Activated B cell treated with CpG ODN at 0.5 μM for 24 hours (primary cell): ENCODE measurements at regions of chr22 and their contacts with region 1.

Region 1: GRCh38 chr22:28594797-28595462 is 84.7 kb downstream of the TTC28 start:
- DNase-seq: no peak
- ATAC-seq: peak; percentile 71
- H3K4me3 Mint-ChIP-seq: no peak overlapping the region
- H3K27ac Mint-ChIP-seq: no peak overlapping the region
- H3K4me1 Mint-ChIP-seq: no peaks in the 10 kb centered on the region
- H3K27me3 Mint-ChIP-seq: no peaks in the 10 kb centered on the region
- CTCF ChIP-seq: peak; percentile 60

Region 2: GRCh38 chr22:28019881-28020871 is 574.8 kb before region 1 on chr22:
- CTCF ChIA-PET with region 1: interaction called, 30 read pairs
- POLR2A ChIA-PET with region 1: no interaction called
- intact Hi-C with region 1: no loop called
- DNase-seq: peak; percentile 58
- ATAC-seq: peak; percentile 96
- H3K4me3 Mint-ChIP-seq: no peak overlapping the region
- H3K27ac Mint-ChIP-seq: no peak overlapping the region
- H3K4me1 Mint-ChIP-seq: peaks cover 2% of the 10 kb centered on the region
- H3K27me3 Mint-ChIP-seq: no peaks in the 10 kb centered on the region
- CTCF ChIP-seq: no peak

Region 3: GRCh38 chr22:28783786-28784671 is 189.1 kb after region 1 on chr22:
- CTCF ChIA-PET with region 1: no interaction called
- POLR2A ChIA-PET with region 1: no interaction called
- intact Hi-C with region 1: no loop called
- DNase-seq: no peak
- ATAC-seq: no peak
- H3K4me3 Mint-ChIP-seq: no peak overlapping the region
- H3K27ac Mint-ChIP-seq: no peak overlapping the region
- H3K4me1 Mint-ChIP-seq: peaks cover 9% of the 10 kb centered on the region
- H3K27me3 Mint-ChIP-seq: no peaks in the 10 kb centered on the region
- CTCF ChIP-seq: no peak